Left colon (tissue), 2 donors: ENCODE measurements at regions of chr17 and their contacts with region 1.

Region 1: DNA sequence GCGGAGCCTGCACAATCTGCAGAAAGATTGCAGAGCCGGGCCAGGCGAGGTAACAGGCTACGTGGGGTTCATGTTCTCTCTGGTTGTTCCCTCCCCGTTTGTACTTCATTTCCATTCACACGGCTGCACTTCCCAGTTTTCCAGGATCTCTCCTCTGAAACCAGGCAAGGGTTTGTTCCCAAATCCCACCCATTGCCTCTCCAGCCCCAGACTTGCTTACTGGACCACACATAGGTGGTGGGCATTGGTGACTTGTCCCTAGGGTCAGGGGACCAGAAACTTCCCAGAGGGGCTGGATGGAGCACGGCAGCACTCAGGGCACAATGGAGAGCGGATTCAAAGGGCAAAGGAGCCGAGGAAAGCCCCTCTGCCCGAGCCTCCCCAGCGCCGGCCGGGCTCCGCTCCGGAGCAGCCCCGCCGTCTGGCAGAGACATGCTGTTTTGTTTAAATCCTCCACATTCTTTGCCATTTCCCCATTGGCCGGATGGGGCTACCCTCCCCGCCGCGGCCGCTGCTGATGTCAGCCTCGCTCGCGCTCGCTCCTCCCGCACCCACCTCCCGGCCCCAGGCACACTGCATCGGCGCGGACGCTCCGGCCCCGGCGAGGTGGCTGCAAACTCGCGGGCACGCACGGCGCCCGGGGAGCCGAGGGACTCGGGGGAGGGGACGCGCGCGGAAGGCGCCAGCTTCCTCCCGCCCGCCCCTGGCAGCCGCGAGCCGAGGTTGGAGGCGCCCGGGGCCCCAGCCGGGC is at the start of gene PITPNC1:
- DNase-seq: peak; percentile 81 to 89
- ATAC-seq: peak; percentile 74
- total RNA-seq, gene PITPNC1: 13.7 to 15.6 TPM

Region 2: GRCh38 chr17:67475236-67475937 is 98.5 kb after region 1 on chr17:
- intact Hi-C with region 1: loop called (anchors 5 kb)
- DNase-seq: peak; percentile 64 to 89
- ATAC-seq: peak; percentile 98

Region 3: GRCh38 chr17:67689534-67690177 is 312.7 kb after region 1 on chr17:
- intact Hi-C with region 1: loop called (anchors 5 to 10 kb)
- DNase-seq: peak in 1 of 2 donors; percentile 29
- ATAC-seq: peak; percentile 51